A549 (cell line): ENCODE measurements at regions of chr3 and their contacts with region 1.

Region 1: DNA sequence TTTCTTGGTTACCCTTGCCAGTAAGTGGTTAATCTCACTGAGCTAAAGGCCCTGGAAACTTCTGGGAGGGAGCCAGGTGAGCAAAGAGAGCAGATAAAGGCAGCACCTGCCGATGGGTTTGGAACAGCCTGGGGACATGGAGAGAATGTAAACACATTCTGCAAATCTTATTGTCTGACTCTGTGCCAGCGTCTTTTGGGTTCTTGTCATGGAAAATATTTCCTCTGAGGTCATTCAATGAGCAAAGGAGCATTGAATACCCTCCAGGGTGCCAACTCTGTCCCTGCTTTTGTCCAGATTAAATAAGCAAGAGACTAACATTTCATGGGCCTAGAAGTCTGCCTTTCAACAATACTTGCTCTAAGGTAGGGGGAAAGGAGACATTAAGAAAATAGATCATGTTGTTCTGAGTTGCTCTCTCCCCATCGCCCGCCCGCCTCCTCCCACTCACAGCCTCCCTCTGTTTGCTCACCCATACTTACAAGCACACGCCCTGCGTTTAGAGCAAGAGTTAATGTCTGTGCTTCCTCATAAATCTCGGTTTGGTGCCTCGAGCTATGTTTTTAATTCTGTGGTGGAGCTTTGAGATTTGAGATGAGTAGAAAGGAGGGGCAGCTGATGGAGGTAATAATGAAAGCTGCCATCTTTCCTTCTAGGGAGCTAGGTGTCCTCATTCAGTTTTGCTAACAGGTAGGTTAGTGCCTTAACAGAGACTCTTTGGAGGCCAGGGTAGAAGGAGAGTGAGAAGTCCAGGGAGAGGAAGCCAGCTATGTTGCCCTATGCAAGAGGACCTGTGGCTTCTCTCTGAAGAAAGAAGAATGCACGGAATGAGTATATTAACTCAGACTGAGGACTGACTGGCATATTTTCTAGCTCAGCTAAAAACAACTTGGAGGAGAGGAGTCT is 132.9 kb downstream of the TPRG1 start:
- DNase-seq: peak; percentile 72 to 95
- ATAC-seq: peak; percentile 95 to 97
- H3K4me3 ChIP-seq: no peak overlapping the region
- H3K27ac ChIP-seq: peak overlapping the region; percentile 88 to 95
- H3K4me1 ChIP-seq: peaks cover 36% of the 10 kb centered on the region
- CTCF ChIP-seq: no peak
- EP300 ChIP-seq: peak; percentile 84 to 90; a peak in 4 of 5 replicates
- POLR2A ChIP-seq: no peak
- RAD21 ChIP-seq: peak; percentile 6 to 37; a peak in 2 of 5 replicates

Region 2: DNA sequence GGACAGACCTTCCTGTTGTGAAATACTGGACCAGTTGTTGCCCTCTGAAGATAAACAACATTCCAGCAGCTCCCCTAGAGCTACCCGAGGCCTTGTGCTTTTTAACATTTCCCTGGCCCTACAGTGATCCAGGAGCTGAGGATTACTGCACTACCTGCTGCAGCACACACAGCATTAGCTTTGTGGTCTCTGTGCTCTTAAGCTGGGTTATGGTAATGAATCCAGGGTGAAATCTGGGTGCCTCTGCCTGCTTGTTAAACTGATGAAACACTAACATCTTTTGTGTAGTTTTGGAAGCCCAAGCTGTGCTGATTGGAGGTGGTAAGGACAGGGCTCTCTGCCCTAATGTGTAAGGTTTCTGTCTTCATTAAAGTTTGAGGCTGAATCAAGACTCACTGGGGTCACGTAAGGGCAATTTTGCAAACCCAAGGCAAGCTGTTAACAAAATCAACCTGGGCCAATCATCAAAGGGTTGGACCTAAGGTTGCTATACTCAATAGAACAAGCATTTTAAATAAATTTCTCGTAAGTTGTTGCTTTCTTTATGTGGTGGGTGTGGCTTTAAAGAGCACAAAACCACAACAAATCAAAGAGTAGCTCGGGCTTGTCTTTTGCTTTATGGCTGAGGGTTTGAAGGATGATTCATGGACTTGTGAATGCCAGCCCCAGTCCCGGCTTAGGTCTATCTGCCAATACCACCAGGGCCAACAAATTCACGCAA is 50.9 kb after region 1 on chr3:
- CTCF ChIA-PET with region 1: interaction called, 3 read pairs
- POLR2A ChIA-PET with region 1: interaction called, 11 read pairs
- DNase-seq: peak; percentile 31 to 89
- ATAC-seq: peak; percentile 81 to 85
- H3K4me3 ChIP-seq: no peak overlapping the region
- H3K27ac ChIP-seq: peak overlapping the region; percentile 93 to 94
- H3K4me1 ChIP-seq: peaks cover 48% of the 10 kb centered on the region
- CTCF ChIP-seq: no peak
- EP300 ChIP-seq: peak in 1 of 2 experiments; percentile 53; a peak in 3 of 5 replicates
- POLR2A ChIP-seq: no peak
- RAD21 ChIP-seq: no peak

Region 3: DNA sequence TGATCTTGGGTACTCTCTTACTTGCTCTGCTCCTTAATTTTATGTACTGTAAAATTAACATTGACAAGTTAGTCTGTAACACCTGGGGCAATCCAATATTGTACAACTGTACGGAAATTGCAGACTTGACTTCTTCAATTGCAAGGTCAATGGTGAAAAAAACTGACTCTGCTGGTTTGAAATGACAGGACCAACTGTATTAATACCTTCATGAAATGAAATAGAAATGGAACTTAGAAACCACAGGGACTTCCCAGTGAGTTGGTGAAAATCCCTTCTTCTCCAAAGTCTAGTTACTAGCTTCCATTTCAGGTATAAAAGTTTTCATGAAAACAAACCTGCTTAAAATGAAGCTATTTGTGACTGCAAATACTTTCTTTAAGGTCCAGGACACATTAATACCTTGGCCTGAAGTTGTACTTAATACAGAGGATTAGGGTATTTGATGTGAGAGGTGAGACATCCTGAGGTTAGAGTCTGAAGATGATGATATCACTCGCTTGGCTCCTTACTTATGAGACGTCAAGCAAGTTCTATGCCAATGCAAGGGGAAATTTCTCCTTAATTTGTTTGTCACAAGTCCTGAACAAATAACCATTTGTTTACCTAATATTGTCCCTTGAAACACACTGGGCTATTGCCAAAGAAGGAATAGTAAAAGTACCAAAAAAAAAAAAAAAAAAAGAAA is 100.2 kb after region 1 on chr3:
- CTCF ChIA-PET with region 1: no interaction called
- POLR2A ChIA-PET with region 1: no interaction called
- DNase-seq: peak in 1 of 2 experiments; percentile 4
- ATAC-seq: no peak
- H3K4me3 ChIP-seq: no peak overlapping the region
- H3K27ac ChIP-seq: no peak overlapping the region
- H3K4me1 ChIP-seq: no peaks in the 10 kb centered on the region
- CTCF ChIP-seq: no peak
- EP300 ChIP-seq: no peak
- POLR2A ChIP-seq: no peak
- RAD21 ChIP-seq: no peak